Panc1 (cell line): ENCODE measurements at regions of chr13 and their contacts with region 1.

Region 1: GRCh38 chr13:19592657-19593180 is 31.4 kb upstream of the TPTE2 start:
- DNase-seq: no peak
- ATAC-seq: no peak
- H3K4me3 ChIP-seq: no peak overlapping the region
- H3K27ac ChIP-seq: no peak overlapping the region
- H3K4me1 ChIP-seq: peaks cover 12% of the 10 kb centered on the region
- H3K27me3 ChIP-seq: no peaks in the 10 kb centered on the region
- CTCF ChIP-seq: no peak

Region 2: GRCh38 chr13:19940106-19940505 is 347.4 kb after region 1 on chr13:
- CTCF ChIA-PET with region 1: interaction called, 10 read pairs
- POLR2A ChIA-PET with region 1: no interaction called
- in situ Hi-C with region 1: no loop called
- intact Hi-C with region 1: no loop called
- DNase-seq: no peak
- ATAC-seq: no peak
- H3K4me3 ChIP-seq: no peak overlapping the region
- H3K27ac ChIP-seq: no peak overlapping the region
- H3K4me1 ChIP-seq: no peaks in the 10 kb centered on the region
- H3K27me3 ChIP-seq: no peaks in the 10 kb centered on the region
- CTCF ChIP-seq: no peak